SK-MEL-5 (cell line): ENCODE measurements at regions of chr10 and their contacts with region 1.

Region 1: GRCh38 chr10:89466599-89467035 is 52.2 kb downstream of the IFIT5 start:
- DNase-seq: peak; percentile 28

Region 2: DNA sequence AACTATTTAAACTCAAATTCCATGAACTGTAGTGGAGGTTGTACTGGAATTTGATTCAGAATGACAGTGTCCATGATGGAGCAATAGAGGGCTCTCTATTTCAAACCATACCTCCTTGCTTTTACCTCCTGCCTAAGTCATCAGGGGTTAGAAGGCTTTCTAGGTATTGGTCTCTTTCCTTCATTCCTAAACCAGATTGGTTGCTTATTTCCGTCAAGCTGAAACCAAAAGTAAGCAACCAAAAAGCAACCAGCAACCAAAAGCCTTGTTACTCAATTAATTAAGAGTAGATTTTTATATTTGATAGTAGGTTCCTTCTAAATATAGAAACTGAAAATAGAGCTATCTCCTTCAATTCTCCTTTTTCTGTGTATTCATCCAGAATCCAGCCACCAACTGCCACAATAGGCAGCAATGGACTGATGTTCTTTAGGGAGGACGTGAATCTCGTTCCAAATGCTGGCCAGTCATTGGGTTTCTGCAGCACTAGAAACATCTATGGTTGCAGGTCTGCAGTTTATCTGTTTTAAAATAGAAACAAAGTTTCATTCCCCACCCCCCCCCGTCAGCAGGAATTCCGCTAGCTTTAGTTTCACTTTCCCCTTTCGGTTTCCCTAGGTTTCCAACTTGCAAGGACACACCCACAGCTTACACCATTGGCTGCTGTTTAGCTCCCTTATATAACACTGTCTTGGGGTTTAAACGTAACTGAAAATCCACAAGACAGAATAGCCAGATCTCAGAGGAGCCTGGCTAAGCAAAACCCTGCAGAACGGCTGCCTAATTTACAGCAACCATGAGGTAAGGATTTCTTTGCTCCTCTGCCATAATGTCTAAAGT is 74.5 kb before region 1 on chr10 and contains the start of gene IFIT1:
- in situ Hi-C with region 1: no loop called
- DNase-seq: peak; percentile 78
- total RNA-seq, gene IFIT1: 0.24 and 1.3 TPM in 2 replicates

Region 3: DNA sequence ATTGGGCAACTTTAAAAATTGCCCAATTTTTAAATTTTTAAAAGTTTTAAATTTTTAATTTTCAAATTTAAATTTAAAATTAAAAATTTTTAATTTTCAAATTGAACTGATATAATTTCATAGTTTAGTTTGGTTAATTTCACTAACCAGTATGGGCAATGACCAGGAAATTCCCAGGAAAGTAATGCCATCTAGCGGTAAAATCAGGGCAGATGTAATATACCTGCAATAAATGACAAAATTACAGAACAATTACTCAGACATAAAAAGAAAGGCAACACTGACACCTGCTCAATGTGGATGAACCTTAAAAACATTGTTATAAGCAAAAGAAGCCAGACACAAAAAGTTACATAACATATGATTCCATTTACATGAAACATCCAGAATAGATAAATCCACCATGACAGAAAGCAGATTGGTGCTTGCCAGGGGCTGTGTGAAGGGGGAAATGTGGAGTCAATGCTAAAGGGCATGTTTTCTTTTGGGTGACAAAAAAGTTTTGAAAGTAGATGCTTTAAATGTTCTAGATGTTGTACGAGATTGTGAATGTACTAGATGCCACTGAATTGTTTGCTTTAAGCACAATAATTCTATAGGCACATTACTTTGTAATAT is 97.4 kb after region 1 on chr10:
- in situ Hi-C with region 1: loop called (anchors 25 kb)
- DNase-seq: peak; percentile 45